ENCODE measurements at regions of chr15 and their contacts with region 1.

Region 1: DNA sequence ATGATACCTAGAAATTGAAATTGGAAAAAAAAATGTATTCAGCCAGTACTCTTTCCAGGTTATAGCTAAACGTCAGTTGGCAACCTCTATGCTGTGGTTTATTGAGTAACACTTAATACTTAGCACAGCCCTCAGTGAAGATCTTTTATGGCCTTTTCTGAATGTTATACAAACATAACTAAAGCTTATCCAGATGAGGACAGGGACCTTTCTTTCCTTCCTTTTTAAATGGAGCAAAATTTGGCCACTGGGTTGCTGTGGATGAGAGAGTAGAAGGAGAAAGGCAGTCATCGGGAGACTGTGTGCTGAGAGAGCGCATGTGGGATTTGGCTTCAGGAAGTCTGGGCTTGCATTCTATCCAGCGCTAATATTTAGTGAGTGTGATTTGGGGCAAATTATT is 36.1 kb downstream of the IGF1R start:
- DNase-seq: peak; percentile 59
- H3K4me3 ChIP-seq: no peak overlapping the region
- H3K27ac ChIP-seq: peak overlapping the region; percentile 69
- H3K4me1 ChIP-seq: peaks cover 33% of the 10 kb centered on the region
- H3K27me3 ChIP-seq: no peaks in the 10 kb centered on the region
- CTCF ChIP-seq: no peak

Region 2: DNA sequence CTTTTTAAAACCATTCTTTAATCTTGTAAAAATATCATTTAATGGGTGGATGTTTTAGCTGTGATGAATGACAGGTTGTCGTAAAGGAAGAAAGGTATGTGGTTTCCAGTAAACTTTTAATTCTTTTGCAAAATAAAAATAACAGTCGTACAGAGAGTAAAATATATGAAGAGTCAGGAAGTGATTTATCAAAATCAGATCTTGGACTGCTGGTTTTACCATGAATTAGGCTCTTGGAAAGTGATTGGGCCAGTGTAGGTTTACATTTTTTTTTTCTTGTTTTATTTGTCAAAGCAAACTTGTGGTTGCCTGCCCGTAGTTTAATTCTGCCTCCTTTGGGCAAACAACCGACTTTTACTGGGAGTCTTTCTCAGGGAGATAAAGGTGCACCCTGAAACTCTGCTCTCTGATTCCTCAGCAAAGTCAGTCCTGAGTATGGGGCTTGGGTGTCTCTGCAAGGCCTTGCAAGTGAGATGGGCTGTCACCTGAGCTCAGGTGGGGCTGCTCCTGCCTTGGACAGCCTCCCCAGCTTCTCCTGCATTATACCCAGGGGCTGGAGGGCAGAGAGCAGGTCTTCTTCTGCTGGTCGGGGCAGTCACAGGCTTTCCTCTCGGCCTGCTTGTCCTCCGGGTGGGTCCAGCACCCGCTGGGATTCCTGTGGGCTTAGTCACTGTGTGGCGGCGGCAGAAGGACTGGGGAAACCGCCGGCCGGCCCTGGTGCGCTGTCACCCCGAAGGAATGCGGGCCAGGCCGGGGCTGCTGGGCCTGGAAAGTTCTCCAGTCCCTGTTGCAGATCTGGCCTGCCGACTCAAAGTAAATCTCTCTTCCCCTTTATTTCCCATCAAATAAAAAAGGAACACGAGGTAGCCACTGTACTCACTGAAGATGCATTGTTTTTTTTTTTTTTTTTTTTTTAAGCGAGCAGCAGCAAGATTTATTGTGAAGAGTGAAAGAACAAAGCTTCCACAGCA is 43.0 kb after region 1 on chr15:
- CTCF ChIA-PET with region 1: no interaction called
- dilution Hi-C with region 1: no loop called
- in situ Hi-C with region 1: no loop called
- intact Hi-C with region 1: loop called (anchors 5 kb)
- DNase-seq: peak; percentile 95
- H3K4me3 ChIP-seq: peak overlapping the region in 1 of 3 experiments; percentile 37
- H3K27ac ChIP-seq: peak overlapping the region; percentile 98
- H3K4me1 ChIP-seq: peaks cover 39% of the 10 kb centered on the region
- H3K27me3 ChIP-seq: no peaks in the 10 kb centered on the region
- CTCF ChIP-seq: no peak

Region 3: GRCh38 chr15:98760112-98760826 is 75.8 kb after region 1 on chr15:
- CTCF ChIA-PET with region 1: no interaction called
- dilution Hi-C with region 1: no loop called
- in situ Hi-C with region 1: no loop called
- intact Hi-C with region 1: loop called (anchors 5 kb)
- DNase-seq: peak; percentile 78
- H3K4me3 ChIP-seq: no peak overlapping the region
- H3K27ac ChIP-seq: peak overlapping the region; percentile 24
- H3K4me1 ChIP-seq: peaks cover 35% of the 10 kb centered on the region
- H3K27me3 ChIP-seq: no peaks in the 10 kb centered on the region
- CTCF ChIP-seq: no peak